Naive thymus-derived CD8-positive, alpha-beta T cell (primary cell): ENCODE measurements at regions of chr2 and their contacts with region 1.

Region 1: GRCh38 chr2:119694845-119695521 is 16.0 kb downstream of the TMEM177 start:
- DNase-seq: peak in 8 of 10 donors; percentile 20 to 73 (median 46)
- ATAC-seq: peak; percentile 80 to 81
- H3K4me3 Mint-ChIP-seq: peak overlapping the region; percentile 66 to 89 (median 80)
- H3K27ac Mint-ChIP-seq: peak overlapping the region; percentile 67 to 96 (median 91)
- H3K4me1 Mint-ChIP-seq: peaks cover 30 to 56% (median 50%) of the 10 kb centered on the region in 4 donors
- H3K27me3 Mint-ChIP-seq: no peaks in the 10 kb centered on the region

Region 2: DNA sequence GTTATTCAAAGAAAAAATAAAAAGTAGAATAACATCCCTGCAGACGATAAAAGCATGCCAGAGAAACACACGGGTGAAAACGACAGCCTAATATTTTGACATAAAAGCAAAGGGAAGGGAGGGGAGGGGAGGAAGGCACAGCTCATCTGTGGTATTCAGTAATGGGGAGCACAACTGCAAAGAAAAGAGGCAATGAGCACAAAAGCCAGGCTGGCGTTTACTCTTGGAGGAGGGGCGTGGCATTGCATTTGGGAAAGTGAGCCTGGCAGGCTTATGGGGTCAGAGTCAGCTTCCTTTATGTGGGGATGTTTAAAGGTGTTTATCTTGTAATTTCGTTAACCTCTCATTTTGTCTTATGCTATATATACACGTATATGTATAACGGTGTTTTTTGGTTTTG is 418.1 kb before region 1 on chr2:
- POLR2A ChIA-PET with region 1: no interaction called
- DNase-seq: no peak
- ATAC-seq: no peak
- H3K4me3 Mint-ChIP-seq: no peak overlapping the region
- H3K27ac Mint-ChIP-seq: no peak overlapping the region
- H3K4me1 Mint-ChIP-seq: no peaks in the 10 kb centered on the region
- H3K27me3 Mint-ChIP-seq: peaks cover 0 to 2% (median 0%) of the 10 kb centered on the region in 5 donors

Region 3: DNA sequence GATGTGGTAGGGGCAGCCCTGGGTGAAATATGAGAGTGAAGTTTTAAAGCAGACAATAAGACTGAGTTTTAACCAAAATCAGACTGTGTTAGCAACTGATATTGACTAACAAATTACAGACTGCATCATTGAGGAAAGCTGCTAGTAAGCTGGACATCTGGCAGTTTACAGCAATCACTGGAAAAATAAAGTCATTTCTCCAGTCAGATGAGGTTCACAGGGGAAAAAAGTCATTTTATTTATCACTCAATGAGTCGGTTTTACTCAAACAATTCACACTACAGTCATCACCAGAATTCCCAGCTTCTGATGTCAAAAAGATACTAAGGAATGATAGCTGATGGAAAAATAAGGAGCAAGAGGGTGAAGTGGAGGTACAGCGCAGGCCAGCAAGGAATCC is 26.4 kb before region 1 on chr2:
- POLR2A ChIA-PET with region 1: no interaction called
- DNase-seq: no peak
- ATAC-seq: no peak
- H3K4me3 Mint-ChIP-seq: no peak overlapping the region
- H3K27ac Mint-ChIP-seq: peak overlapping the region in 1 of 10 donors; percentile 25
- H3K4me1 Mint-ChIP-seq: peaks cover 0 to 1% (median 0%) of the 10 kb centered on the region in 4 donors
- H3K27me3 Mint-ChIP-seq: peaks cover 0 to 6% (median 2%) of the 10 kb centered on the region in 5 donors

Region 4: GRCh38 chr2:119678998-119679710 is 15.8 kb before region 1 on chr2 and contains the start of gene TMEM177:
- POLR2A ChIA-PET with region 1: interaction called, 57 read pairs
- DNase-seq: peak; percentile 79 to 92 (median 86)
- ATAC-seq: peak; percentile 79 to 87
- H3K4me3 Mint-ChIP-seq: peak within 1 kb of the TSS; percentile 83 to 98 (median 96)
- H3K27ac Mint-ChIP-seq: peak within 1 kb of the TSS; percentile 91 to 100 (median 94)
- H3K4me1 Mint-ChIP-seq: peaks cover 26 to 47% (median 40%) of the 10 kb centered on the region in 4 donors
- H3K27me3 Mint-ChIP-seq: no peaks in the 10 kb centered on the region
- polyA plus RNA-seq, gene TMEM177: 10.2 to 18.2 (median 15.5) TPM